Activated B cell treated with CpG ODN at 0.5 μM for 24 hours (primary cell): ENCODE measurements at regions of chr14 and their contacts with region 1.

Region 1: GRCh38 chr14:54642801-54643697 is 76.1 kb downstream of the SAMD4A start:
- DNase-seq: no peak
- ATAC-seq: no peak
- H3K4me3 Mint-ChIP-seq: no peak overlapping the region
- H3K27ac Mint-ChIP-seq: no peak overlapping the region
- H3K4me1 Mint-ChIP-seq: no peaks in the 10 kb centered on the region
- H3K27me3 Mint-ChIP-seq: no peaks in the 10 kb centered on the region
- CTCF ChIP-seq: no peak

Region 2: DNA sequence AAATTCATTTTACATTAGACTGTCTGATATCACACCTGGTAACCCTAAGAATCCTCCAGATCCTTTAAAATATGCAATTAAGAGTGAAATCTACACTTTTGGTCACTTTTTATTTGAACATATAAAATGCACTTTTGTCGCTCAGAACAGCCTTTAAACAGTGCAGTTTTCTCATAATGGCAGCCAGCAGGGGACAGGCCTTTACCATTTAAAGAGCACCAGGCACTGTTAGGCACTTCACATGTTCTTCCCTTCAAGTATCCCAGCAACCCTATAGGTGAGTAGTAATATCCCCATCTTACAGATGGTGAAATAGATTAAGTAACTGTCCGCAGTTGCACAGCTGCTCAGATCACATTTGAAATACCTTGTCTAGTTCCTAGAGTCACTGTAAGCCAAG is 87.4 kb before region 1 on chr14:
- CTCF ChIA-PET with region 1: no interaction called
- POLR2A ChIA-PET with region 1: no interaction called
- intact Hi-C with region 1: no loop called
- DNase-seq: no peak
- ATAC-seq: no peak
- H3K4me3 Mint-ChIP-seq: no peak overlapping the region
- H3K27ac Mint-ChIP-seq: no peak overlapping the region
- H3K4me1 Mint-ChIP-seq: no peaks in the 10 kb centered on the region
- H3K27me3 Mint-ChIP-seq: no peaks in the 10 kb centered on the region
- CTCF ChIP-seq: no peak

Region 3: DNA sequence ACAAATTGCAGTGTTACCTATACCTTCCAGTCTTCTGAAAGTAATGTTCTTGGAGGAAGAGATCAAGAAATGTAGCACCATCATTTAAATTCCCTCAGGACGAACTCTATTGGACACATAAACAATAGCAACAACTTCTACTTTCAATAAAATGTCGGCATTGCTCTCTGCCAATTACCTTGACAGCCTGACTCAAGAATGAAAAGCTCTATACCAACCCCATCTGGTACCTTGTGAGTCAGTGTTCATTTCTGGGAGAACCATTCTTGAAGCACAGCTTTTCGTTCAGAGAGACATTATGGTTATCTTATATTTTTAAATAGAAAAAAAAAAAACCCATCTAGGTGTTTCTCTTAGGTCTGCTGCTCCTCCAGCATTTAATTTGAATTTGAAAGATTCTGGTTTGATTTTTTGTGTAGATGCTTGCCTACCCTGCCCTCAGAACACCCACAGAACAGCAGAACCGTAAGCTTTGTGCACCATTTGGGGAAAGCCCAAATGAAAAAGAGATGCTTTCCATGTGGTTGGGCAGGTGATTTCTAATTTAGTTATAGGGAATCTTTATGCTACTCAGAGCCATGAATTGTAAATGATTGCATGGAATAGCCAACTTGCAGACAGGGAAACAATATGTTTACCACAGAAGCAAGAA is 79.9 kb after region 1 on chr14:
- CTCF ChIA-PET with region 1: no interaction called
- POLR2A ChIA-PET with region 1: no interaction called
- intact Hi-C with region 1: no loop called
- DNase-seq: no peak
- ATAC-seq: peak; percentile 70
- H3K4me3 Mint-ChIP-seq: no peak overlapping the region
- H3K27ac Mint-ChIP-seq: no peak overlapping the region
- H3K4me1 Mint-ChIP-seq: peaks cover 6% of the 10 kb centered on the region
- H3K27me3 Mint-ChIP-seq: no peaks in the 10 kb centered on the region
- CTCF ChIP-seq: no peak

Region 4: GRCh38 chr14:54782751-54783679 is 140.0 kb after region 1 on chr14:
- CTCF ChIA-PET with region 1: no interaction called
- POLR2A ChIA-PET with region 1: interaction called, 11 read pairs
- intact Hi-C with region 1: no loop called
- DNase-seq: peak; percentile 35
- ATAC-seq: peak; percentile 94
- H3K4me3 Mint-ChIP-seq: peak overlapping the region; percentile 11
- H3K27ac Mint-ChIP-seq: no peak overlapping the region
- H3K4me1 Mint-ChIP-seq: peaks cover 32% of the 10 kb centered on the region
- H3K27me3 Mint-ChIP-seq: no peaks in the 10 kb centered on the region
- CTCF ChIP-seq: no peak